BJ (cell line): ENCODE measurements at regions of chr7 and their contacts with region 1.

Region 1: DNA sequence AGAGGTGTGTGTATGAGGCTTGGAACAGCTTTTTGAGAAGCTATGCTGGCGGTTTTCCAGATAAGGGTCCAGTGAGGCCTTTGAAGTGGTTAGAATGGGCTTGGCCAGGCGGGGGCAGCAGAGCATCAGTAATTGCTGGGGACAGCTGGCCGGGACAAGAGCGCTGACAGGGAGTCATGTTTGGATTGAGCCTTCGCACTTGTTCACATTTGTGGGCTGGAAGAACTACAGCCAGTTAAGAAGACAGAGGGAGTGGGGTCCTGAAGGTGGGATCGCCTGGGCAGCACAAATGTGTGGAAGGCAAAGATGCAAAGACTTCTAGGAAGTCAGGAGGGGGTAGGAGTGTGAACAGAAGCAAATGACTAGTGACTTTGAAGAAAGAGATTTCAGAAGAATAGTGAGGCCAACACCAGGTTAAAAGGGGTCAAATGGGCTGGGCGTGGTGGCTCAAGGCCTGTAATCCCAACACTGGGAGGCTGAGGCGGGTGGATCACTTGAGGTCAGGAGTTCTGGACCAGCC is 12.7 kb upstream of the SDHAF3 start:
- DNase-seq: no peak
- H3K4me3 ChIP-seq: no peak overlapping the region
- H3K27me3 ChIP-seq: no peaks in the 10 kb centered on the region; the same call in 1 of the 2 replicates
- CTCF ChIP-seq: peak; percentile 68

Region 2: DNA sequence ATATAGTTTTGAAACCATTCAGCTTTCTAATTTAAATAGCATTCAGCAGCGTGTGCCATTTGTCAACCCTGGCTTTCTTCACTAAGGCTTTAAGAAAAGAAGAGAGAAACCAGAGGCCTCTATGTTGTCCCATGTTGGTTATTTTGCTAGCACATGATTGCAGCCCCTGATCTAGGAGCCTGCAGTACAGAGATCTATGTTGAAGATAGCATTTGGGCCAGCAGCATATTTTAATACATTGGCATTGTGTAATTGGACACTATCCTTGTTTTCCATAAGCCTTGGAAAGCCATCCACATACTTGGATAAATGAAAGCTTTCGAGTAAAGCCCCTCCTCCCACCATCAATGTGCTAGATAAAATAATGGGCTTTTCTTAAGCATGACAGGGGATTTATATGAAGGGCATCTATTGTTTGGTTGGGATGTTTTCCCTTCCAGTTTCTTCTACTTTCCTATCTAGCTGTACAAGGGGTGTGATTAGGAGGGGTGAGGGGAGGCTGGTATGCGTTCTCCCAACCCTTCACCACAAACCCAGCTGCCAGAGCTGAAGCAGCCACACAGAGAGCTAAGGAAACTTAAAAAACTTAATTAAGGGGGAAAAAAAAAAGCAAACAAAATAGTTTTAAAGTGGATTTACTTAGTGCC is 10.4 kb before region 1 on chr7:
- CTCF ChIA-PET with region 1: interaction called, 11 read pairs
- POLR2A ChIA-PET with region 1: no interaction called
- DNase-seq: no peak
- H3K4me3 ChIP-seq: no peak overlapping the region
- H3K27me3 ChIP-seq: no peaks in the 10 kb centered on the region
- CTCF ChIP-seq: no peak

Region 3: GRCh38 chr7:97117372-97118188 is 12.8 kb after region 1 on chr7 and contains the start of gene SDHAF3:
- CTCF ChIA-PET with region 1: interaction called, 20 read pairs
- POLR2A ChIA-PET with region 1: no interaction called
- DNase-seq: peak; percentile 91
- H3K4me3 ChIP-seq: peak within 1 kb of the TSS; percentile 71
- H3K27me3 ChIP-seq: no peaks in the 10 kb centered on the region
- CTCF ChIP-seq: peak; percentile 39
- polyA plus RNA-seq, gene SDHAF3: 3.9 and 8.1 TPM in 2 replicates

Region 4: DNA sequence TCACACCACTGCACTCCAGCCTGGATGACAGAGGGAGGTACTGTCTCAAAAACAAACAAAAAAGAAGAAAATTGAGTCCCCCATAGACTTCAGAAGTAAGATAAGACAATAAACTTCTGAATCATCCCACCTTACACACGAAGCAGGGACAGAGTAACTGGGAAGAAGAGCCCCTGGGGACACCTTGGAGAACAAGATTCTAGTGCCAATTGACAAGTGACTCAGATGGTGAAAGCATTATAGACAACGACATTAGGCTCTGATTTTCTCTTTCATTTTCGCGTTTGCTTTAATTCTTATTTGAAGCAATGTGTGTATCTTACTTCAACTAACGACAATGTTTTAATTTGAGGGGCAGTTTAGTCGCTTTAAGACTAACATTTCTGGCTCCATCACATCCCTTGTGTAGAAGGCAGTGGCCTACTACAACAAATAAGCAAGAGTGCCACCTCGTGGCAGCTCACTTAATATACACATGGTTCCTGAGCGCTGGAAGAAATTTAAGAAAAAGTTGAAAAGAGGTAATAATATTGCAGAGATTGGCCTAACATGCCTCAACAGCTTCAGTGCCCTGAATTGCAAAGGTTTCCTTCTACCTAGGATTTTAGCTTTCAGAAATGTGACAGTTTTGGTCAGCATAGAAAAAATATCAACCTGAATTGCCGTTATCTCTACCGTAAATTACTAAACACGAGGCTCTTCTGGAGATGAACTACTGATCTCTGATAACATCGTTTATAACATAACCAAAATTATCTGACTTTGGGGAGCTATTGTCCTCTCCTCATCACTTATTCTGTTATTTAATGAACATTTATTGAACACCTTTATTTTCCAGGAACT is 730.7 kb after region 1 on chr7:
- CTCF ChIA-PET with region 1: interaction called, 29 read pairs
- POLR2A ChIA-PET with region 1: no interaction called
- DNase-seq: no peak
- H3K4me3 ChIP-seq: no peak overlapping the region
- H3K27me3 ChIP-seq: no peaks in the 10 kb centered on the region; the same call in 1 of the 2 replicates
- CTCF ChIP-seq: peak; percentile 63

Region 5: DNA sequence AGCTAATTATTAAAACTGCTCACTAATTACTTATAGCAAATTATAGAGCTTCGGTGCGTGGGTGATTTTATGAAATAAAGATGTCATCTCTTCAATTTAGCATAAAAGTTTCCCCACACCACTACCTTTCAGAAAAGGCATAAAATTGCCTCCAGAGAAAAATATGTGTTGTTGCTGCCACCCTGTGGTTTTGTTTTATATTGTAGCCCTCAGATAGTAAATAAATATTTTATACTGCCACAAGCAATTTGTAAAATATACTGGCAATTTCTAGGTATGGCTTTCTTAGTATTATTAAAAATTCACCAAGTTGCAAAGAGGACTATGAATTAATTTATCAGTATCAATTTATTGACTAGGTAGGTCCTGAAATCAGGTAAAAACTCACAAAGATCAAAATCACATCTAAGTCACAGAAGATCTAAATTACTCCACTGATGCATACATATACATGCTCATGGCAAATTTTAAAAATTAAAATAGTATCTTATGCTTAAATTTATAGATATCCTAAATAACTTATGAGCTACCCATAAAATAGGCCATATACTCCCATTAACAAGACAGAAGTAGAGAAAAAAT is 740.9 kb after region 1 on chr7:
- CTCF ChIA-PET with region 1: interaction called, 13 read pairs
- POLR2A ChIA-PET with region 1: no interaction called
- DNase-seq: no peak
- H3K4me3 ChIP-seq: no peak overlapping the region
- H3K27me3 ChIP-seq: no peaks in the 10 kb centered on the region
- CTCF ChIP-seq: peak; percentile 44